ENCODE measurements at regions of chr22 and their contacts with region 1.

Region 1: GRCh38 chr22:19629720-19630419 is 84.4 kb upstream of the SEPTIN5 start:
- DNase-seq: no peak
- H3K4me3 ChIP-seq: no peak overlapping the region
- H3K27me3 ChIP-seq: peaks cover 3% of the 10 kb centered on the region
- CTCF ChIP-seq: peak; percentile 96

Region 2: GRCh38 chr22:19143967-19144400 is 485.9 kb before region 1 on chr22:
- CTCF ChIA-PET with region 1: interaction called, 22 read pairs
- POLR2A ChIA-PET with region 1: no interaction called
- DNase-seq: no peak
- H3K4me3 ChIP-seq: peak overlapping the region; percentile 78
- H3K27me3 ChIP-seq: peaks cover 22% of the 10 kb centered on the region
- CTCF ChIP-seq: no peak

Region 3: DNA sequence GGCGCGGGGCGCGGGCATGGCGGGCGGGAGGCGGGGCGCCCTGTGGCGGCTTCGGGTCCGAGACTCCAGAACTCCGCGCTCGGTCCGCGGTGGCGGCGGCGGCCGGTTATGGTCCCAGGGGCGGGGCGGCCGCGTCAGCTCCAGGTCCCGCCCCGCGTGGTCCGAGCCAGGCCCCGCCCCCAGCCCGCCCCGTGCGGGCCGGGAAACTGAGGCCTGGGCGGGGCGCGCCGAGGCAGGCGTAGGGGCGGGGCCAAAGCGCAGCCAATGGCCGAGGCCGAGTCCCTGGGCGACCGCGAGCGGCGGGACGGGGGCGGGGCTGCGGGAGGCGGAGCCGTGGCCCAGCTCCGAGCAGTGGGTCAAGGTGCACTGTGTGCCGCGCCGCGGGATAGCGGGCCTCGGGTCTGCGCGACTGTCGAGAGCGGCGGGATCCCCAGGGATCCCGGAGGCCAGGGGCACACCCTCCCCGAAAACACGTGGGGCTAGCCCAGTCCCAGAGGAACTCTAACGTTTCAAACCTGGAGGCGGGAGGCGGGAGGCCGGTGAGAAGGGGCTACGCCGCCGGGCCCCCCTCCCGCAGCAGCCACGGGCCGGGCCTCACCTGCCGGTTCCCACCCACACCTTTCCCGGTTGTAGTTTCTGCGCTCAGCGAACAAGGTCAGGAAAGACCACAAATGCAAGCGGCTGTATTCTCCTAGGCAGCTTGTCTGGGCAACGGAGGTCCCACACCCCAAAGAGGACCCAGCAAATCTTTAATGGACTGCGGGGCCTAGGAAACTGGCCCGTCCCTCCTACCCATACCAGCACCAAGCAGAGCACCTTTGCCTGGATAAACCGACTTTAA is 451.0 kb before region 1 on chr22 and contains the start of gene SLC25A1:
- CTCF ChIA-PET with region 1: interaction called, 11 read pairs
- POLR2A ChIA-PET with region 1: no interaction called
- DNase-seq: no peak
- H3K4me3 ChIP-seq: peak within 1 kb of the TSS; percentile 80
- H3K27me3 ChIP-seq: no peaks in the 10 kb centered on the region
- CTCF ChIP-seq: no peak
- polyA plus RNA-seq, gene SLC25A1: 19.6 and 36.9 TPM in 2 replicates

Region 4: DNA sequence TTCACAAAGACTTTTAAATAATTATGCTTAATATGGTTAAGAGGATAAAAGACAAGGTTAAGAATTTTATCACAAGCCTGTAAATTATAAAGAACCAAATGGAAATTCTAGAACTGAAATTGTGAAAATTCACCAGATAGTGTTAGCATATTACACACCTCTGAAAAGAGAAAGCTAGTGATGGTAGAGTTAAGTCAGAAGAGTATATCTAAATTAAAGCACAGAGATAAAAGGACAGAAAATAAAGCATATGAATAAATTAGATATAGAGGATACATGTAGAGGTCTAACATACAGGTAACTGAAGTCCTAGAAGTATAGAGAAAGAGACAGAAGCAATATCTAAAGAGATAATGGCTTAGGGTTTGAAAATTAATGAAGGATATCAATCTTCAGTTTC is 334.1 kb before region 1 on chr22:
- CTCF ChIA-PET with region 1: interaction called, 13 read pairs
- POLR2A ChIA-PET with region 1: no interaction called
- DNase-seq: no peak
- H3K4me3 ChIP-seq: no peak overlapping the region
- H3K27me3 ChIP-seq: no peaks in the 10 kb centered on the region
- CTCF ChIP-seq: no peak

Region 5: GRCh38 chr22:19495562-19496323 is 134.1 kb before region 1 on chr22:
- CTCF ChIA-PET with region 1: interaction called, 43 read pairs
- POLR2A ChIA-PET with region 1: no interaction called
- DNase-seq: no peak
- H3K4me3 ChIP-seq: no peak overlapping the region
- H3K27me3 ChIP-seq: no peaks in the 10 kb centered on the region
- CTCF ChIP-seq: peak; percentile 15; the same call in 1 of the 2 replicates

Region 6: DNA sequence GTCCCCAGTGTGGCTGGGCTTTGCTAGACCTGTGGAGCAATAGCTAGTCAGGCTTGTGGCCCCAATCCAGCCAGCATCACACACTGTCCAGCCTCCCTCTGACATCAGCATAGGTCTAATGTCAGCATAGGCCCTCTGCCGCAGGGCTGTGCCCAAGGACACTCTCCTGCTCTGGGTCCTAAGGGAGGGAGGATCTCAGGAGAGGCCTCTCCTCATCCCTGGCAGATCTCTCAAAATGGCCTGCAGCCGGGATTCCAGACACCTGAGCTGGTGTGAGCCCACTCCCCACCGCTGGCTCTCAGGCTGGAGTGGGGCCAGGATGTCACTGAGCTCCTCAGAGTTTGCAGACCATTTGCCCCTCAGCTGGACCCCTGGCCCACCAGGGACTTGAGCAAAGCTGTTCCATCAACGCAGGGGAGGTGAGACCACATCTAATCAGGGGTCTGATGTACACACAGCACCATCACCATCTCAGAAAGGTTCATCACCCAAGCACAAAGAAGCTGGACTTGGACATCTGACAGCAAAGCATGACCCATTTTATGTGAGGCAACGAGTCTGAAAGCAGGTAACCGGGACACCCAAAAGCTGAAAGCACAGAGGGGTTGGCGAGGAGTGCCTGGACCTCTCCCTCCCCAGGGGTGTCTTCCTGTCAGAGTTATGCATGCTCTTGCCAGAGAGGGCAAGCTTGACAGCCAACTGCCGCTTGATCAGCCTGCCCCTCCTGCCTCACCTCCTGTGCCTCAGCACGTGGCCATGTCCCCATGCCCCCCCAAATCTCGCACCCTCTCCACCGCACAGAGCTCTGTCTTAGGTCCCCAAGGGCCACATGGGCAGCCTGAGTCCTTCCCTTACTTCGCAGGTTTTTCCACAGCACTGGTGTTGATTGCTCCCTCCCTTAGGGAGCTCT is 14.7 kb after region 1 on chr22:
- CTCF ChIA-PET with region 1: interaction called, 17 read pairs
- POLR2A ChIA-PET with region 1: no interaction called
- DNase-seq: no peak
- H3K4me3 ChIP-seq: no peak overlapping the region
- H3K27me3 ChIP-seq: peaks cover 7% of the 10 kb centered on the region
- CTCF ChIP-seq: no peak

Region 7: GRCh38 chr22:19717691-19718455 is 88.0 kb after region 1 on chr22:
- CTCF ChIA-PET with region 1: interaction called, 13 read pairs
- POLR2A ChIA-PET with region 1: no interaction called
- DNase-seq: peak; percentile 10
- H3K4me3 ChIP-seq: peak overlapping the region; percentile 84
- H3K27me3 ChIP-seq: peaks cover 3% of the 10 kb centered on the region; the same call in 1 of the 2 replicates
- CTCF ChIP-seq: peak; percentile 68

Region 8: GRCh38 chr22:19730655-19731360 is 100.9 kb after region 1 on chr22:
- CTCF ChIA-PET with region 1: no interaction called
- POLR2A ChIA-PET with region 1: no interaction called
- DNase-seq: peak; percentile 3
- H3K4me3 ChIP-seq: peak overlapping the region; percentile 52
- H3K27me3 ChIP-seq: no peaks in the 10 kb centered on the region
- CTCF ChIP-seq: peak; percentile 96

Region 9: GRCh38 chr22:19795617-19796008 is 165.7 kb after region 1 on chr22:
- CTCF ChIA-PET with region 1: no interaction called
- POLR2A ChIA-PET with region 1: no interaction called
- DNase-seq: no peak
- H3K4me3 ChIP-seq: no peak overlapping the region
- H3K27me3 ChIP-seq: no peaks in the 10 kb centered on the region
- CTCF ChIP-seq: no peak

Region 10: GRCh38 chr22:19806213-19807145 is 176.6 kb after region 1 on chr22:
- CTCF ChIA-PET with region 1: no interaction called
- POLR2A ChIA-PET with region 1: no interaction called
- DNase-seq: no peak
- H3K4me3 ChIP-seq: no peak overlapping the region
- H3K27me3 ChIP-seq: no peaks in the 10 kb centered on the region
- CTCF ChIP-seq: no peak

Measured in BJ (cell line).